Natural killer cell (primary cell): ENCODE measurements at regions of chr4 and their contacts with region 1.

Region 1: GRCh38 chr4:79982601-79983322 is 90.3 kb downstream of the ANTXR2 start:
- DNase-seq: no peak
- ATAC-seq: no peak
- H3K4me3 ChIP-seq: no peak overlapping the region
- H3K4me3 Mint-ChIP-seq: no peak overlapping the region
- H3K27ac ChIP-seq: no peak overlapping the region
- H3K27ac Mint-ChIP-seq: no peak overlapping the region
- H3K4me1 ChIP-seq: no peaks in the 10 kb centered on the region
- H3K4me1 Mint-ChIP-seq: no peaks in the 10 kb centered on the region
- H3K27me3 ChIP-seq: no peaks in the 10 kb centered on the region
- H3K27me3 Mint-ChIP-seq: no peaks in the 10 kb centered on the region
- CTCF ChIP-seq: no peak

Region 2: GRCh38 chr4:79958466-79959264 is 24.1 kb before region 1 on chr4:
- intact Hi-C with region 1: loop called (anchors 2 kb)
- DNase-seq: no peak
- ATAC-seq: no peak
- H3K4me3 ChIP-seq: no peak overlapping the region
- H3K4me3 Mint-ChIP-seq: no peak overlapping the region
- H3K27ac ChIP-seq: no peak overlapping the region
- H3K27ac Mint-ChIP-seq: no peak overlapping the region
- H3K4me1 ChIP-seq: no peaks in the 10 kb centered on the region
- H3K4me1 Mint-ChIP-seq: no peaks in the 10 kb centered on the region
- H3K27me3 ChIP-seq: no peaks in the 10 kb centered on the region
- H3K27me3 Mint-ChIP-seq: no peaks in the 10 kb centered on the region
- CTCF ChIP-seq: no peak